HepG2 (cell line): ENCODE measurements at regions of chrX and their contacts with region 1.

Region 1: GRCh38 chrX:50430917-50431575 is 39.6 kb downstream of the DGKK start:
- DNase-seq: peak; percentile 41
- ATAC-seq: no peak; the same call in 2 of the 3 replicates
- H3K4me3 ChIP-seq: peak overlapping the region; percentile 54 to 58 (median 58)
- H3K27ac ChIP-seq: peak overlapping the region; percentile 87
- H3K4me1 ChIP-seq: peaks cover 82% of the 10 kb centered on the region
- H3K27me3 ChIP-seq: no peaks in the 10 kb centered on the region
- CTCF ChIP-seq: no peak
- EP300 ChIP-seq: no peak
- POLR2A ChIP-seq: no peak
- RAD21 ChIP-seq: no peak

Region 2: GRCh38 chrX:50343917-50344316 is 87.1 kb before region 1 on chrX:
- CTCF ChIA-PET with region 1: no interaction called
- POLR2A ChIA-PET with region 1: no interaction called
- in situ Hi-C with region 1: no loop called
- intact Hi-C with region 1: no loop called
- DNase-seq: no peak
- ATAC-seq: no peak
- H3K4me3 ChIP-seq: no peak overlapping the region
- H3K27ac ChIP-seq: no peak overlapping the region
- H3K4me1 ChIP-seq: peaks cover 7% of the 10 kb centered on the region
- H3K27me3 ChIP-seq: no peaks in the 10 kb centered on the region
- CTCF ChIP-seq: no peak
- EP300 ChIP-seq: no peak
- POLR2A ChIP-seq: no peak
- RAD21 ChIP-seq: no peak

Region 3: DNA sequence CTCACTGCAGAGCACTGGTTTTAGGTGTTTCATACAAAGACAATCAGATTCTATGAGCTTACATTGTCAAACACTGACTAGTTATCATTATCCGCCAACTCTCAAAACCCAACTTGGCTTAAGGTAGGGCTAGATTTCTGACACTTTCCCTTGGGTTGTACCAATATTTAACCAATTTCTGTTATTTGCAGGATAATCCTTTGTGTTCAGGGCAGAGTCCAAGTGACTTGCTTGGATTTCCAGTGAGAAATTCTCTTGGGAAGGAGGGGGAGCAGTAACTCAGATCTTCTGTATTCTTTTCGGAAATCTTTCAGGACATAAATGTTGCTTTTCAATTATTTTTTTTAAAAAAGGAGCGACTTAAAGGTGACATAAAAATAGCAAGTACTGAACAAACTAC is 16.5 kb after region 1 on chrX:
- CTCF ChIA-PET with region 1: no interaction called
- POLR2A ChIA-PET with region 1: interaction called, 6 read pairs
- in situ Hi-C with region 1: no loop called
- intact Hi-C with region 1: loop called (anchors 2 kb)
- DNase-seq: peak; percentile 47
- ATAC-seq: peak; percentile 34; the same call in 1 of the 3 replicates
- H3K4me3 ChIP-seq: no peak overlapping the region; a peak in 1 of 6 replicates
- H3K27ac ChIP-seq: no peak overlapping the region
- H3K4me1 ChIP-seq: peaks cover 46% of the 10 kb centered on the region
- H3K27me3 ChIP-seq: no peaks in the 10 kb centered on the region
- CTCF ChIP-seq: no peak
- EP300 ChIP-seq: no peak
- POLR2A ChIP-seq: no peak
- RAD21 ChIP-seq: no peak

Region 4: GRCh38 chrX:50470103-50471031 is 39.3 kb after region 1 on chrX and contains the start of gene DGKK:
- CTCF ChIA-PET with region 1: no interaction called
- POLR2A ChIA-PET with region 1: no interaction called
- in situ Hi-C with region 1: no loop called
- intact Hi-C with region 1: loop called (anchors 5 kb)
- DNase-seq: peak; percentile 67
- ATAC-seq: peak; percentile 94
- H3K4me3 ChIP-seq: peak within 1 kb of the TSS; percentile 42 to 68 (median 50); a peak in 5 of 6 replicates
- H3K27ac ChIP-seq: no peak within 1 kb of the TSS
- H3K4me1 ChIP-seq: no peaks in the 10 kb centered on the region
- H3K27me3 ChIP-seq: peaks cover 0 to 10% of the 10 kb centered on the region in 2 experiments; a peak in 2 of 5 replicates
- CTCF ChIP-seq: no peak
- EP300 ChIP-seq: no peak
- POLR2A ChIP-seq: peak in 1 of 2 experiments; percentile 48; a peak in 2 of 4 replicates
- RAD21 ChIP-seq: no peak
- total RNA-seq, gene DGKK: 24.0 and 43.2 TPM in 2 replicates